Naive thymus-derived CD4-positive, alpha-beta T cell (primary cell): ENCODE measurements at regions of chrX and their contacts with region 1.

Region 1: GRCh38 chrX:149286940-149287349 is 218.2 kb downstream of the IDS start:
- DNase-seq: peak in 8 of 9 donors; percentile 8 to 65 (median 45)
- ATAC-seq: peak; percentile 53
- H3K4me3 ChIP-seq: no peak overlapping the region
- H3K4me3 Mint-ChIP-seq: no peak overlapping the region
- H3K27ac ChIP-seq: no peak overlapping the region
- H3K27ac Mint-ChIP-seq: no peak overlapping the region
- H3K4me1 ChIP-seq: no peaks in the 10 kb centered on the region
- H3K4me1 Mint-ChIP-seq: peaks cover 0 to 12% (median 0%) of the 10 kb centered on the region in 7 donors
- H3K27me3 ChIP-seq: no peaks in the 10 kb centered on the region
- H3K27me3 Mint-ChIP-seq: peaks cover 0 to 5% (median 0%) of the 10 kb centered on the region in 5 donors

Region 2: DNA sequence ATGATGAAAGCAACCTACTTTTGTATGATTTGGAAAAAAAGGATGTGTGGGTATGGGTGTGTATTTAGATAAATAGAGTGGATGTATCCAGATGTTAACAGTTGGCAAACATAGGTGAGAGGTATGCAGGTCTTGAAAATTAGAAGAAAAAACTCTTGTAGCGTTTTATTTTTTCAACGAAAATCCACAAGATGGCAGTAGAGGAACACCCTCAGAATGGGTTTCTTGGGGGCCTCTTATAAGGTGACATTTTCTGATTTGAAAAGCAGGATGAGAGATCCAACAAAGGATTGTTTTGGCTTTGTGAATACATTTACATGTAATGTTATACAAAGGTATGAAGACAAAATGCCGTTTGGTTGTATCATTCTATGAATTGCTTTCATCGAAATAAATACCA is 1237.5 kb before region 1 on chrX:
- CTCF ChIA-PET with region 1: interaction called, 3 read pairs
- POLR2A ChIA-PET with region 1: no interaction called
- intact Hi-C with region 1: loop called (anchors 1 kb)
- DNase-seq: peak in 6 of 9 donors; percentile 10 to 41 (median 36)
- ATAC-seq: no peak
- H3K4me3 ChIP-seq: no peak overlapping the region
- H3K4me3 Mint-ChIP-seq: no peak overlapping the region
- H3K27ac ChIP-seq: no peak overlapping the region
- H3K27ac Mint-ChIP-seq: no peak overlapping the region
- H3K4me1 ChIP-seq: no peaks in the 10 kb centered on the region
- H3K4me1 Mint-ChIP-seq: no peaks in the 10 kb centered on the region
- H3K27me3 ChIP-seq: no peaks in the 10 kb centered on the region
- H3K27me3 Mint-ChIP-seq: peaks cover 0 to 5% (median 0%) of the 10 kb centered on the region in 5 donors

Region 3: GRCh38 chrX:149470955-149471354 is 184.0 kb after region 1 on chrX:
- CTCF ChIA-PET with region 1: no interaction called
- POLR2A ChIA-PET with region 1: no interaction called
- intact Hi-C with region 1: loop called in 1 of 2 experiments (anchors 10 kb)
- DNase-seq: peak; percentile 21 to 65 (median 49)
- ATAC-seq: peak; percentile 86
- H3K4me3 ChIP-seq: no peak overlapping the region
- H3K4me3 Mint-ChIP-seq: peak overlapping the region in 2 of 10 donors; percentile 30 to 35
- H3K27ac ChIP-seq: no peak overlapping the region
- H3K27ac Mint-ChIP-seq: no peak overlapping the region
- H3K4me1 ChIP-seq: no peaks in the 10 kb centered on the region
- H3K4me1 Mint-ChIP-seq: no peaks in the 10 kb centered on the region
- H3K27me3 ChIP-seq: no peaks in the 10 kb centered on the region
- H3K27me3 Mint-ChIP-seq: peaks cover 0 to 4% (median 3%) of the 10 kb centered on the region in 5 donors